WTC11 (cell line): ENCODE measurements at regions of chr2 and their contacts with region 1.

Region 1: DNA sequence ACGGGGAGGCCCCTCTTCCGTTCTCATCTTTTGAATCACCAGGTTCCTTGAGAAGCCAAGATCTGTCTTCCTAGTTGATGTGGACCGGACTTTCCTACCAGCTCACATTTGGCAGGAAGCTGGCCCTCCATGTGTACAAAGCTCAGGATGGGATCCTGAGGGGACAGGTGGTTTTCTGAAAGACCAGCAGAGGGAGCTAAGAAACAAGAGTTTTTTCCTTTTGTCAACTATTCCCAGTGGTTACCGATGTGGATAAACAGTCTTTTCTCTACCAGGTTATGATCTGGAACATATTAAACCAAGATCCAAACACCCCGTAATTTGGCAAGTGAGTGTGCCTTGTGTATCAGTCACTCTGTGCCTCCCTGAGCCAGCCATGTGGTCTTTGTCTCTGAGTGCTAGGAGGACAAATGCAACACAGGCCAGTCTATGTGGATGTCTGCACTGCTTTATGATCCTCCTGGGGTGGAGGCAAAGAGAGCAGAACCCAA is 25.1 kb upstream of the ARHGAP25 start:
- DNase-seq: no peak
- ATAC-seq: peak; percentile 96
- H3K4me3 Mint-ChIP-seq: no peak overlapping the region
- H3K27ac Mint-ChIP-seq: no peak overlapping the region
- H3K4me1 Mint-ChIP-seq: peaks cover 6% of the 10 kb centered on the region
- H3K27me3 Mint-ChIP-seq: no peaks in the 10 kb centered on the region
- CTCF ChIP-seq: peak; percentile 51; the same call in 1 of the 2 replicates

Region 2: GRCh38 chr2:68594674-68595492 is 114.6 kb before region 1 on chr2:
- CTCF ChIA-PET with region 1: interaction called, 26 read pairs
- POLR2A ChIA-PET with region 1: no interaction called
- DNase-seq: peak; percentile 59
- ATAC-seq: peak; percentile 65
- H3K4me3 Mint-ChIP-seq: no peak overlapping the region
- H3K27ac Mint-ChIP-seq: no peak overlapping the region
- H3K4me1 Mint-ChIP-seq: 0 out of 2 replicates have a peak, but pooled peaks cover 2% of the 10 kb centered on the region
- H3K27me3 Mint-ChIP-seq: no peaks in the 10 kb centered on the region; the same call in 1 of the 2 replicates
- CTCF ChIP-seq: peak; percentile 72

Region 3: GRCh38 chr2:68637047-68637446 is 72.4 kb before region 1 on chr2:
- CTCF ChIA-PET with region 1: no interaction called
- POLR2A ChIA-PET with region 1: no interaction called
- DNase-seq: no peak
- ATAC-seq: no peak
- H3K4me3 Mint-ChIP-seq: no peak overlapping the region
- H3K27ac Mint-ChIP-seq: no peak overlapping the region
- H3K4me1 Mint-ChIP-seq: peaks cover 8% of the 10 kb centered on the region
- H3K27me3 Mint-ChIP-seq: peaks cover 9% of the 10 kb centered on the region
- CTCF ChIP-seq: no peak

Region 4: DNA sequence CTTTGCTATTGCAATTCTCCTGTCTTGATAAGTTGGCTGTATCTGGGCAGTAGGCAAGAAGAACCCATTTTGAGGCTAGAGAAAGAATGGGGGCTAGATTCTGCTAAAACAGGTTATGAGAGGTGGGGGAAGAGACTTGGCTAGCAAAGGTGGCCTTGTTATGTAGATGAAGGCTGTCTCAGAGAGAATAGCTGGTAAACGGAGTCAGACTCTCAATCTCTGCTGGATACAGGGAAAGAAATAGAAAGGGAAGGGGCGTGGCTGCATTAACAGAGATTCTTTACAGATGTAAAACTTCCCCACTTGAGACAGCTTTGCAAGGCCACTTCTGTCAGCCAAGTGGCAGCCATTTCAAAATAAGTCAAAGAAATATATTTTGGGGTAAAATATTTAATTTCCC is 12.9 kb before region 1 on chr2:
- CTCF ChIA-PET with region 1: interaction called, 15 read pairs
- POLR2A ChIA-PET with region 1: no interaction called
- DNase-seq: no peak
- ATAC-seq: peak; percentile 92
- H3K4me3 Mint-ChIP-seq: no peak overlapping the region
- H3K27ac Mint-ChIP-seq: peak overlapping the region; percentile 76; the same call in 1 of the 2 replicates
- H3K4me1 Mint-ChIP-seq: peaks cover 36% of the 10 kb centered on the region
- H3K27me3 Mint-ChIP-seq: no peaks in the 10 kb centered on the region
- CTCF ChIP-seq: no peak

Region 5: GRCh38 chr2:68751397-68752339 is 42.2 kb after region 1 on chr2:
- CTCF ChIA-PET with region 1: interaction called, 16 read pairs
- POLR2A ChIA-PET with region 1: no interaction called
- DNase-seq: peak; percentile 93
- ATAC-seq: peak; percentile 95
- H3K4me3 Mint-ChIP-seq: no peak overlapping the region
- H3K27ac Mint-ChIP-seq: 0 out of 2 replicates have a peak overlapping the region, but pooled peaks have one; percentile 41
- H3K4me1 Mint-ChIP-seq: peaks cover 16% of the 10 kb centered on the region
- H3K27me3 Mint-ChIP-seq: no peaks in the 10 kb centered on the region
- CTCF ChIP-seq: peak; percentile 84

Region 6: GRCh38 chr2:68925295-68925896 is 215.9 kb after region 1 on chr2:
- CTCF ChIA-PET with region 1: interaction called, 26 read pairs
- POLR2A ChIA-PET with region 1: no interaction called
- DNase-seq: peak; percentile 38
- ATAC-seq: peak; percentile 90
- H3K4me3 Mint-ChIP-seq: no peak overlapping the region
- H3K27ac Mint-ChIP-seq: no peak overlapping the region
- H3K4me1 Mint-ChIP-seq: peaks cover 5% of the 10 kb centered on the region
- H3K27me3 Mint-ChIP-seq: no peaks in the 10 kb centered on the region
- CTCF ChIP-seq: peak; percentile 63